Activated CD4-positive, alpha-beta T cell treated with anti-CD3 and anti-CD28 coated beads for 36 hours (primary cell): ENCODE measurements at regions of chr15 and their contacts with region 1.

Region 1: DNA sequence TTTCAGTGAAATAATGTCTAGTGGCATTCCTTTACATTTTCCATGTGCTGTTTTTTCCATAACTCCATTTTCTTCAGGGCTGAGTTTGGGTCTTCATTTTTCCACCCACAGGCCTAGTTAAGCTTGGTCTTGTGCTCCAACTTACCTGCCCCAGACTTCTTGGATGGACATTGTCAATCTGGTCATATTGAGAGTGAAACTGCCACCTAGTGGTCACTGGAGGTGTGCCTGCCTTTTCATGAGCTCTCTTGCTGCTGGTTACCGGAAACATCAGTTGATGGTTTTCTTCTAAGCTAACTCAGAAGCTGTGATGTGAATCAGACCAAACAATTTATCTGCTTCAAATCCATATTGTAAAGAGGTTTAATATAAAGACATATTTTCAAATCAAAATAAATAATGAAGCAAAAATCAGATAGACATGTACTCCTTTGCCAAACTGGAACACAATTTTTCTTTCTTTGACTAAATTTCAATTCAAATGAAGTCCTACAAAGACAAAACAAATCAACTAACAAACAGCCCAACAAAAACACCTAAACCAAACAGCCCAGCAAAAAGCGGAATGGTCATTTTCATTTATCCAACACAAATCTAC is 135.1 kb upstream of the RASGRP1 start:
- DNase-seq: peak; percentile 83
- ATAC-seq: peak; percentile 51
- H3K4me3 Mint-ChIP-seq: no peak overlapping the region
- H3K27ac Mint-ChIP-seq: peak overlapping the region; percentile 67
- H3K4me1 Mint-ChIP-seq: peaks cover 53% of the 10 kb centered on the region
- H3K27me3 Mint-ChIP-seq: no peaks in the 10 kb centered on the region

Region 2: GRCh38 chr15:38252481-38253412 is 447.0 kb before region 1 on chr15 and contains the start of gene SPRED1:
- CTCF ChIA-PET with region 1: interaction called, 5 read pairs
- POLR2A ChIA-PET with region 1: no interaction called
- intact Hi-C with region 1: loop called (anchors 2 to 10 kb)
- DNase-seq: peak; percentile 49
- ATAC-seq: peak; percentile 11
- H3K4me3 Mint-ChIP-seq: peak within 1 kb of the TSS; percentile 85
- H3K27ac Mint-ChIP-seq: peak within 1 kb of the TSS; percentile 69
- H3K4me1 Mint-ChIP-seq: peaks cover 25% of the 10 kb centered on the region
- H3K27me3 Mint-ChIP-seq: peaks cover 29% of the 10 kb centered on the region
- total RNA-seq, gene SPRED1: 0.90 to 0.96 TPM

Region 3: DNA sequence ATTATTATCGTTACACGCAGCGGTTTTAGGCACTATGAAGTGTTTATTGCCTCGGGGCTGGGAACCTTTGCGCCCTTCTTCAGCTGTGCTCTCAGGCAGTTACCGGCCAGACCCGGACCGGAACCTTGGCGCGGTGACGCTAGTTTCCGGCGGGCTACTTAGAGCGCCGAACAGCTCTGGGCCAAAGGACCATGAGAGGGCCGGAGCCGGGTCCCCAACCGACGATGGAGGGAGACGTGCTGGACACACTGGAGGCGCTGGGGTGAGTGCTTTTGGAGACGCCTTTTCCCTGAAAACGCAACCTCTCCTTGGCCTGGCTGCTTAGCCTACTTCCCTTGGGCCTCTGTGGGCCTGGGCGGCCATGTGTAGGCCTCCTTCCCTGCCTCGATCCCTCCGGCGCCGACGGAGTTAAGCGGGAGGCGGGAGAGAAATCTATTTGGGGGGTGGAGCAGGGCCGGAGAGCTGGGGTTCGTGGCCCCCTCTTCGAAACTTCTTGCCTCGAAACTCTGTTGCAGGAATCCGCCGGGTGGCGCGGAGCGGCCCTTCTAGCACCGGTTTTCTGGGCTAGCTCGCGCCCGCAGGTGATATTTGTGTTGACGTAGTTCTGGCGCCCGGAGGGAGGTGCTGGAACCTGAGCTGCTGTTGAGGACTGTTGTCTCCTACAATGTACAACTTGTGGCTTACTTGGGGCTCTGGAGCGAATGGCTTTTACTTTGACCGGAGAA is 245.6 kb before region 1 on chr15 and contains the start of gene FAM98B:
- CTCF ChIA-PET with region 1: interaction called, 27 read pairs
- POLR2A ChIA-PET with region 1: interaction called, 4 read pairs
- intact Hi-C with region 1: loop called in 1 of 2 experiments (anchors 1 kb)
- DNase-seq: peak; percentile 92
- ATAC-seq: peak; percentile 92
- H3K4me3 Mint-ChIP-seq: peak within 1 kb of the TSS; percentile 78
- H3K27ac Mint-ChIP-seq: peak within 1 kb of the TSS; percentile 93
- H3K4me1 Mint-ChIP-seq: peaks cover 31% of the 10 kb centered on the region
- H3K27me3 Mint-ChIP-seq: no peaks in the 10 kb centered on the region
- total RNA-seq, gene FAM98B: 54.2 to 81.9 TPM

Region 4: GRCh38 chr15:38474155-38474757 is 225.5 kb before region 1 on chr15:
- CTCF ChIA-PET with region 1: interaction called, 44 read pairs
- POLR2A ChIA-PET with region 1: no interaction called
- intact Hi-C with region 1: loop called in 1 of 2 experiments (anchors 1 kb)
- DNase-seq: peak; percentile 30
- ATAC-seq: peak; percentile 97
- H3K4me3 Mint-ChIP-seq: no peak overlapping the region
- H3K27ac Mint-ChIP-seq: no peak overlapping the region
- H3K4me1 Mint-ChIP-seq: peaks cover 11% of the 10 kb centered on the region
- H3K27me3 Mint-ChIP-seq: no peaks in the 10 kb centered on the region

Region 5: GRCh38 chr15:38490242-38490922 is 209.3 kb before region 1 on chr15:
- CTCF ChIA-PET with region 1: interaction called, 27 read pairs
- POLR2A ChIA-PET with region 1: no interaction called
- intact Hi-C with region 1: no loop called
- DNase-seq: no peak
- ATAC-seq: no peak
- H3K4me3 Mint-ChIP-seq: no peak overlapping the region
- H3K27ac Mint-ChIP-seq: peak overlapping the region; percentile 71
- H3K4me1 Mint-ChIP-seq: peaks cover 54% of the 10 kb centered on the region
- H3K27me3 Mint-ChIP-seq: no peaks in the 10 kb centered on the region

Region 6: DNA sequence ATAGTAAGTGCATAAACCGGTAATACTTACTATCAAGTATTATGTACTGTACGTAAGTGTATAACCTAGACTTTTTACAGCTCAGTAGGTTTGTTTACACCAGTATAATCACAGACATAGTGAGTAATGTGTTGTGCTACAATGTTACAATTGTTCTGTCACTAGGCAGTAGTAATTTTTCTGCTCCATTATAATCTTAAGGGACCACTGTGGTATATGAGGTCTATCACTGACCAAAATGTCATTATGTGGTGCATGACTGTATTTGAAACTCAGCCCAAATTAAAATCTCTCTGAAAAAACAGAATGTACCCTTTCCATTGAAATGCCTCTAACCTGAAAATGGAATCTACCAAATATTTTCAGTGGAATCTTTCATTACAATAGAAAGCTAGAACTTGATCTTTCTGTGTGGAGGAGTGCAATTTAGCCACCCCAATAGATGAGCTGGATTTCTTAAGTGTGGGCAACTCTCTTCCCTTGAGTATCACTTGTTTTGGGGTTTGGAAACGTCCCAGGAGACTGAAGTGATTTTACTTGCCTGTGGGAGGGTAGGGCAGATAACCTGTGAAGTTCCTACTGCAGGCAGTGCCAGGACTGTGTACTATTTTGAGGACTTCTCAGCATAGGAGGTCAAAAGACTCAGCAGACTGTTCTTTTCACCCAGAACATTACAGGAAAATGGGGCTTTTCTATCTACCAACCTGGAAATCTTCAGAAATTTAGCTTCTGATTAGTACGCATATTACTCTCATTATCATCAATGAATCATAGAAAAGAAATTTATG is 194.9 kb before region 1 on chr15:
- CTCF ChIA-PET with region 1: interaction called, 13 read pairs
- POLR2A ChIA-PET with region 1: no interaction called
- intact Hi-C with region 1: no loop called
- DNase-seq: no peak
- ATAC-seq: no peak
- H3K4me3 Mint-ChIP-seq: no peak overlapping the region
- H3K27ac Mint-ChIP-seq: peak overlapping the region; percentile 64
- H3K4me1 Mint-ChIP-seq: peaks cover 32% of the 10 kb centered on the region
- H3K27me3 Mint-ChIP-seq: no peaks in the 10 kb centered on the region

Region 7: GRCh38 chr15:38610748-38611147 is 89.0 kb before region 1 on chr15:
- CTCF ChIA-PET with region 1: interaction called, 5 read pairs
- POLR2A ChIA-PET with region 1: interaction called, 10 read pairs
- intact Hi-C with region 1: no loop called
- DNase-seq: peak; percentile 78
- ATAC-seq: peak; percentile 52
- H3K4me3 Mint-ChIP-seq: peak overlapping the region; percentile 42
- H3K27ac Mint-ChIP-seq: peak overlapping the region; percentile 96
- H3K4me1 Mint-ChIP-seq: peaks cover 81% of the 10 kb centered on the region
- H3K27me3 Mint-ChIP-seq: no peaks in the 10 kb centered on the region

Region 8: DNA sequence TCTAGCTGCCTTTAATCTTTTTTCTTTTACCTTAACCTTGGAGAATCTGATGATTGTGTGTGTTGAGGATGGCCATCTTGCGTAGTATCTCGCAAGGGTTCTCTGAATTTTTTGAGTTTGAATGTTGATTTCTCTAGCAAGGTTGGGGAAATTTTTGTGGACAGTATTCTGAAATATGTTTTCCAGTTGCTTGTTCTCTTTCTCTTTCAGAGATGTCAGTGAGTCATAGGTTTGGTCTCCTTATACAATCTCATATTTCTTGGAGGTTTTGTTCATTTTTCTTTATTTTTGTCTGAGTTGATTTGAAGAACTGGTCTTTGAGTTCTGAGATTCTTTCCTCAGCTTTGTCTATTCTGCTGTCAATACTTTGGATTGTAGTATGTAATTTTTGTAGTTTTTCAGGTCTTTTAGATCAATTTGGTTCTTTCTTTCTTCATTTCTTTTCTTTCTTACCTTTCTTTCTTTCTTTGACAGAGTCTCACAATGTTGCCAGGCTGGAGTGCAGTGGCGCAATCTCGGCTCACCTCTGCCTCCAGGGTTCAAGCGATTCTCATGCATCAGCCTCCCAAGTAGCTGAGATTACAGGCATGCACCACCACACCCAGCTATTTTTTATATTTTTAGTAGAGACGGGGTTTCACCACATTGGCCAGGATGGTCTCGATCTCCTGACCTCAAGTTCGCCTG is 231.3 kb after region 1 on chr15:
- CTCF ChIA-PET with region 1: no interaction called
- POLR2A ChIA-PET with region 1: no interaction called
- intact Hi-C with region 1: no loop called
- DNase-seq: no peak
- ATAC-seq: no peak
- H3K4me3 Mint-ChIP-seq: no peak overlapping the region
- H3K27ac Mint-ChIP-seq: no peak overlapping the region
- H3K4me1 Mint-ChIP-seq: no peaks in the 10 kb centered on the region
- H3K27me3 Mint-ChIP-seq: peaks cover 8% of the 10 kb centered on the region

Region 9: DNA sequence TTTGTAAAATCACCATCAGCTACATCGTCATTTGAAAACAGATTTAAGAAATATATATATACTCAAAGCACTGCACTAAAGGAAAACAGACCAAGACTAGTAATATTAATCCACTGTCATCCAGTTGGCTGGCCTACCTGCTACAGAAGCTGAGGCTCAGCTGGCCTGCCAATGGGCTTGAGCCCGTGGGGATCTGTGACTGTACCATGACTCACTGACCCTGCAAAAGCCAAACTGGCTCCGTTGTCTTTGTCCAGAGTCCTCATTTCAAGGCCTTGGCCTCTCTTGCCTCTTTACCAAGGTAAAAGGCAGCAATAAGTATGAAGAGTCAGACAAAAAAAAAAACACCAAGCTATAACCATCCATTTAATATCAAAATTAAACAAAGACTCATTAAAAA is 328.3 kb after region 1 on chr15:
- CTCF ChIA-PET with region 1: no interaction called
- POLR2A ChIA-PET with region 1: no interaction called
- intact Hi-C with region 1: no loop called
- DNase-seq: no peak
- ATAC-seq: no peak
- H3K4me3 Mint-ChIP-seq: no peak overlapping the region
- H3K27ac Mint-ChIP-seq: no peak overlapping the region
- H3K4me1 Mint-ChIP-seq: no peaks in the 10 kb centered on the region
- H3K27me3 Mint-ChIP-seq: peaks cover 2% of the 10 kb centered on the region